AG04449 (cell line): ENCODE measurements at regions of chr11 and their contacts with region 1.

Region 1: GRCh38 chr11:132072044-132072857 is 701.8 kb downstream of the NTM start:
- DNase-seq: peak; percentile 99
- H3K4me3 ChIP-seq: peak overlapping the region; percentile 15
- CTCF ChIP-seq: no peak

Region 2: GRCh38 chr11:131637469-131638175 is 434.6 kb before region 1 on chr11:
- CTCF ChIA-PET with region 1: no interaction called
- POLR2A ChIA-PET with region 1: no interaction called
- DNase-seq: peak; percentile 19
- H3K4me3 ChIP-seq: no peak overlapping the region
- CTCF ChIP-seq: no peak

Region 3: GRCh38 chr11:131880316-131880715 is 191.9 kb before region 1 on chr11:
- CTCF ChIA-PET with region 1: no interaction called
- POLR2A ChIA-PET with region 1: no interaction called
- DNase-seq: no peak
- H3K4me3 ChIP-seq: no peak overlapping the region
- CTCF ChIP-seq: no peak

Region 4: DNA sequence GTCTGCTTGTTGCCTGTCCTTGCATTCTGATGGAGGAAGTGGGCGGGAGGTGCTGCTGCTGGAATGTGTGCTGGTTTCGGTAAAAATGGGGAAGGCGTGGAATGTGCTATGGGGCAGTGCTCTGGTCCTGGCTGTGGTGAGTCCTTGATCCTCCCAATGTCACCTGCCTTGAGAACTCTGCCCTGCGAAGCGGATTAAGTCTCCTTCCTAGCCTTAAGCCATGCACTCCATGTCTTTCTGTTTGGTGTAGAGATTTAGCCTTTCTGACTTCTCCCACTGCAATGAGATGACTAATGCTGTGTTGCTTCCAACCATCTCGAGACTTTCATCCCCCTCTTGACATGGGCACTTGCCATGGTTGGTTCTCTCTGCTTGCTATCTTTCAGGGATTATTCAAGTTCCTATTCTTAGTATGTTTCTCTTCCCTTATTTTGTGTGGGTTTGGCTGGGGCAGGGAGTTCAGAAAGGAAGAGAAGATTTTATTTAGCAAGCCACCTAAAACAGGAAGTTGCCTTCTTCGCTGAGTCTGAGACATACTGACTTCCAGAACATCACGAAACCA is 14.0 kb before region 1 on chr11:
- CTCF ChIA-PET with region 1: interaction called, 19 read pairs
- POLR2A ChIA-PET with region 1: interaction called, 15 read pairs
- DNase-seq: no peak
- H3K4me3 ChIP-seq: no peak overlapping the region
- CTCF ChIP-seq: no peak